ENCODE measurements at regions of chr1 and their contacts with region 1.

Region 1: DNA sequence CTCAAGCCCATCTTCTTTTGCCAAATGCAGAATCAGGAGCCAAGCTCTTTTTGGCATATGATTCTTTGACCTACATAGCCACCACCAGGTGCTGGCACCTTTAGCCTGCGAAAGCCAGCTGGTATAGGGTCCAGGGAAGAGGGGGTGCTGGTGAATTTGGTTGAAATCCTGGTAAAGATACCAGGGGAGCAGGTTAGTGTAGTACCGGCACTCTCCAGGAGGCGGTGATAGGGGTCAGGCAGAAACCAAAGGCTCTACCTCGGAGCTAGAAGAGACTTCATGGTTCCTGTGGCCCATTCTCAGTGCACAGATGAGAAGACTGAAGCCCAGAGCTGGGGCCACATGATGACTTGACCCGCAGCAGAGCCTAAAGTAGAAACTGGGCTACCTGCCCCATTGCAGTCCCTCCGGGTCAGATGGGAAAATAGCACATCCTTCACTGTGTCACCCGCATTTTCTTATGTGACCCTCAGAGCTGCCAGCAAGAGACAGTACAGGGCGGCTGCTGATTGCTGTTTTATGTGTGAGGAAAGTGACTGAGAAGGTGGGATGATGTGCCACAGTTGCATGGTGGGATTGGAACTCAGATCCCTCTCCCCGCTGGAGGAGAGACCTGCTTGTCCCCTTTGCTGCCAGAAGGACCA is 36.0 kb upstream of the IL19 start:
- DNase-seq: peak; percentile 49 to 71
- ATAC-seq: peak; percentile 25 to 56 (median 45)
- H3K4me3 ChIP-seq: no peak overlapping the region
- H3K27ac ChIP-seq: no peak overlapping the region
- H3K4me1 ChIP-seq: peaks cover 7% of the 10 kb centered on the region
- H3K27me3 ChIP-seq: no peaks in the 10 kb centered on the region
- CTCF ChIP-seq: peak; percentile 50

Region 2: DNA sequence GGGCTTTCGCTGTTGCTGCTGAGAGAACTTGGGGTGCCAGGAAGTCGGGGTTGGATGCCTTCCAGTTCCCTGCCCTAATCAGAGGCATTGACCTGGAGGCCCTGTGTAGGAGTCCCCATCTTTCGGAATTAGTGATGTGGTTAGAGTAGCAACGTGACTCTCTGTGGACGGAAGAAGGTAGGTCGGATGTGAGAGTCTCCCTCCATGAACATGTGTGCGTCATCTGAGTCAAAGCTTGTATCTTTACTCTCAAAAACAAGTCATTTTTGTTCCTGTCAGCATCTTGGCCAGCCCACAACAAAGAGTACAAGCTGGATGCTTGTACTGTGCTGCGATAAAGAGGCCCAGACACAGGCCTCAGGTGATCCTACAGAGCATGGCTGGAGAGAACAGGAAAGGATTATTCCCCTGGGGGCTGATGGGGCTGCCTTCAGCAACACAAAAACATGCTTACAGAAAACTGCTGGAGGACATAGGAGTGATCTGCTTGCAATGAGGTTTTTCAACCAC is 68.7 kb after region 1 on chr1:
- intact Hi-C with region 1: loop called in 1 of 2 experiments (anchors 5 kb)
- DNase-seq: no peak
- ATAC-seq: peak in 1 of 4 donors; percentile 44
- H3K4me3 ChIP-seq: no peak overlapping the region
- H3K27ac ChIP-seq: no peak overlapping the region
- H3K4me1 ChIP-seq: no peaks in the 10 kb centered on the region
- H3K27me3 ChIP-seq: no peaks in the 10 kb centered on the region
- CTCF ChIP-seq: no peak

Region 3: GRCh38 chr1:207288315-207288714 is 553.7 kb after region 1 on chr1:
- intact Hi-C with region 1: no loop called
- DNase-seq: no peak
- ATAC-seq: no peak
- H3K4me3 ChIP-seq: no peak overlapping the region
- H3K27ac ChIP-seq: no peak overlapping the region
- H3K4me1 ChIP-seq: peaks cover 34% of the 10 kb centered on the region
- H3K27me3 ChIP-seq: no peaks in the 10 kb centered on the region
- CTCF ChIP-seq: no peak

Measured in psoas muscle (tissue), 8 donors.